ENCODE measurements at regions of chr2 and their contacts with region 1.

Region 1: GRCh38 chr2:25276569-25277465 is 64.9 kb downstream of the DNMT3A start:
- DNase-seq: peak; percentile 54 to 84 (median 74)
- ATAC-seq: peak; percentile 37 to 51
- H3K4me3 Mint-ChIP-seq: peak overlapping the region; percentile 66 to 86 (median 80)
- H3K27ac Mint-ChIP-seq: peak overlapping the region; percentile 95 to 100 (median 99)
- H3K4me1 Mint-ChIP-seq: peaks cover 45 to 89% (median 79%) of the 10 kb centered on the region in 4 donors
- H3K27me3 Mint-ChIP-seq: no peaks in the 10 kb centered on the region

Region 2: DNA sequence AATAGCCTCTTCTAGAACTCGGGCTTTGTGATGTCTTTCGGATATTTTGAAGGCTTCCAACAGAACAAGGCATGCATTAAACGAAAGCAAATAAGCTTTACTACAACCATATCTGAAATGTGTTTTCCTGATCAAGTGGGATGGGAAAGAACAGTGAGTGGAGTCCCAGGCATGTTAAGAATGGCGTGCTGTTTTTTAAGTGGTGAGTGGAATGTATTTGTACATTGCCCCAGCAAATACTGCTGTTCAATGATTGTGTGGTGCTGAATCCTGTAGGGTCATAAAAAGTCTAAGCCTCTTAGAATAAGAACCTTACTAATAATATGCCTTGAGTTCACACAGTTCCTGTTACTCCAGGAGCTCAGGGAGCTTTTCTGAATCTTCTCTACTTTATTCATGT is 160.9 kb before region 1 on chr2:
- POLR2A ChIA-PET with region 1: no interaction called
- DNase-seq: no peak
- ATAC-seq: no peak
- H3K4me3 Mint-ChIP-seq: no peak overlapping the region
- H3K27ac Mint-ChIP-seq: no peak overlapping the region
- H3K4me1 Mint-ChIP-seq: no peaks in the 10 kb centered on the region
- H3K27me3 Mint-ChIP-seq: peaks cover 0 to 6% (median 2%) of the 10 kb centered on the region in 5 donors

Region 3: DNA sequence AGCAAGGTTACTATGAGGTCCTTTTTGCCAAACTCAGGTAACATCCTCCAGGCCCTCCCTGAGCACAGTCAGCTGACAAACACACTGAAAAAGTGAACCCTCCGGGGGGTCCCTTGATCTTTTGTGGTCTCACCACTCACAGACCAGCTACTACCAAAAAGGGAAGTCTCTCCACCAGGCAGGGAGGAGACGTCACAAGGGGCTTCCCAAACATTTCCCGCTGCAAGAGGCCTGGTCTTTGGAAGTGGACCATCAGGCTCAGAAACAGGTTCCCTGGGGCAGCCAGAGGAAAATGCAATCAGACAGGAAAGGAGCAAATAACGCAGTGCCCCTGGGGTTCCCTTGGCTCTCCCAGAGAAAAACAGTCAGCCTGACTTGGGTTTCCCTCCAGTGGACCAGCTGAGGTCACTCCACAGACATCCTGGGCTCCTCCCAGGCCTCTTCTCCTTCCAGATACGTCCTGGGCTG is 69.7 kb before region 1 on chr2:
- POLR2A ChIA-PET with region 1: interaction called, 11 read pairs
- DNase-seq: peak in 8 of 10 donors; percentile 19 to 74 (median 49)
- ATAC-seq: peak; percentile 49 to 79
- H3K4me3 Mint-ChIP-seq: peak overlapping the region in 8 of 10 donors; percentile 5 to 78 (median 52)
- H3K27ac Mint-ChIP-seq: peak overlapping the region; percentile 46 to 86 (median 74)
- H3K4me1 Mint-ChIP-seq: peaks cover 21 to 65% (median 57%) of the 10 kb centered on the region in 4 donors
- H3K27me3 Mint-ChIP-seq: no peaks in the 10 kb centered on the region

Region 4: DNA sequence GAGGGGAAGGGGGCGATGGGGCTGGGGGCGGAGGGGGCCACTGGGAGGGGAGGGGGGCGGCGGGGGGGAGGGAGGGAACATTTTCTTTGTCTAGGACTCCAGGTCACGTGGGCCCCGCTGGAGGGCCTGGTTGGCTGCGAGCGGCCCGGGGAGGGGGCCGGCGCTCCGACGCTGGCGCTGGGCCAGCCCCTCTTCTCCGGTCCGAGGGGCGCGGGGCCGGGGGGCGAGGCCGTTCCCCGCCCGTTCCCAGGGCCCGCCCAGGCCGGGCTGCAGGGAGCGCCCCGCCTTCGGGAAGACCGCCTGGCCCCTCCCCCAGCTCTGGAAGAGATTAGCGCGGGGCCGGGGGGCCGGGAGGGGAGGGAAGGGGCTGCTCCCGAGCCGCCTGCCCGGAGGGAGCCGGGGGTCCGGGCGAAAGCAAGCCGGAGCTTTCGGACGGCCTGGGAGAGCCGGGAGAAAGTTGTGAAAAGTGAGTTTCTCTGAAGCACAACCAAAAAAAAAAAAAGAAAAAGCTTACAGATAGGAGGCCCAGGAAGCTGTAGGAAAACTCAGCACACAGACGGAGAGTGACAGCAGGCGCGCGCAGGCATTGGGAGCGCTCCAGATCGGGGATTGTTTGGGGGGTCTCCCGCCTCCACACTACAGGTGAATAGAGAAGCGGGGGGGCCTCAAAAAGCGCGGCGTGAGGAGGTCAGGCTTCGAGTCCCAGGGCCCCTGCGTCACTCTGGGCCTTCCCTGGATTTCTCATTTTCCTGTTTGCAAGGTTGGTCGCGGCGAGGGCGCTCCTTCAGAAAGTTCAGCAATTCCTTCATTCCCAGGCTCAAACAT is 24.3 kb before region 1 on chr2:
- POLR2A ChIA-PET with region 1: interaction called, 56 read pairs
- DNase-seq: peak; percentile 35 to 72 (median 49)
- ATAC-seq: peak; percentile 46 to 56
- H3K4me3 Mint-ChIP-seq: peak overlapping the region; percentile 83 to 95 (median 91)
- H3K27ac Mint-ChIP-seq: peak overlapping the region; percentile 85 to 96 (median 91)
- H3K4me1 Mint-ChIP-seq: peaks cover 42 to 62% (median 53%) of the 10 kb centered on the region in 4 donors
- H3K27me3 Mint-ChIP-seq: no peaks in the 10 kb centered on the region

Region 5: GRCh38 chr2:25294573-25295462 is 18.0 kb after region 1 on chr2:
- POLR2A ChIA-PET with region 1: interaction called, 358 read pairs
- DNase-seq: peak; percentile 56 to 89 (median 75)
- ATAC-seq: peak; percentile 79 to 82
- H3K4me3 Mint-ChIP-seq: peak overlapping the region; percentile 66 to 94 (median 83)
- H3K27ac Mint-ChIP-seq: peak overlapping the region; percentile 95 to 99 (median 98)
- H3K4me1 Mint-ChIP-seq: peaks cover 39 to 79% (median 75%) of the 10 kb centered on the region in 4 donors
- H3K27me3 Mint-ChIP-seq: no peaks in the 10 kb centered on the region

Region 6: GRCh38 chr2:25309402-25309801 is 32.6 kb after region 1 on chr2:
- POLR2A ChIA-PET with region 1: interaction called, 47 read pairs
- DNase-seq: peak; percentile 45 to 85 (median 66)
- ATAC-seq: peak; percentile 48 to 54
- H3K4me3 Mint-ChIP-seq: peak overlapping the region in 8 of 10 donors; percentile 23 to 73 (median 53)
- H3K27ac Mint-ChIP-seq: peak overlapping the region; percentile 58 to 91 (median 85)
- H3K4me1 Mint-ChIP-seq: peaks cover 50 to 98% (median 90%) of the 10 kb centered on the region in 4 donors
- H3K27me3 Mint-ChIP-seq: no peaks in the 10 kb centered on the region

Region 7: GRCh38 chr2:25342372-25343186 is 65.8 kb after region 1 on chr2:
- POLR2A ChIA-PET with region 1: interaction called, 33 read pairs
- DNase-seq: peak; percentile 74 to 88 (median 82)
- ATAC-seq: peak; percentile 80 to 87
- H3K4me3 Mint-ChIP-seq: peak overlapping the region; percentile 70 to 90 (median 81)
- H3K27ac Mint-ChIP-seq: peak overlapping the region in 6 of 10 donors; percentile 37 to 90 (median 81)
- H3K4me1 Mint-ChIP-seq: peaks cover 14 to 40% (median 28%) of the 10 kb centered on the region in 4 donors
- H3K27me3 Mint-ChIP-seq: no peaks in the 10 kb centered on the region

Region 8: GRCh38 chr2:25453199-25453905 is 176.5 kb after region 1 on chr2:
- POLR2A ChIA-PET with region 1: no interaction called
- DNase-seq: no peak
- ATAC-seq: no peak
- H3K4me3 Mint-ChIP-seq: no peak overlapping the region
- H3K27ac Mint-ChIP-seq: no peak overlapping the region
- H3K4me1 Mint-ChIP-seq: no peaks in the 10 kb centered on the region
- H3K27me3 Mint-ChIP-seq: no peaks in the 10 kb centered on the region

Region 9: DNA sequence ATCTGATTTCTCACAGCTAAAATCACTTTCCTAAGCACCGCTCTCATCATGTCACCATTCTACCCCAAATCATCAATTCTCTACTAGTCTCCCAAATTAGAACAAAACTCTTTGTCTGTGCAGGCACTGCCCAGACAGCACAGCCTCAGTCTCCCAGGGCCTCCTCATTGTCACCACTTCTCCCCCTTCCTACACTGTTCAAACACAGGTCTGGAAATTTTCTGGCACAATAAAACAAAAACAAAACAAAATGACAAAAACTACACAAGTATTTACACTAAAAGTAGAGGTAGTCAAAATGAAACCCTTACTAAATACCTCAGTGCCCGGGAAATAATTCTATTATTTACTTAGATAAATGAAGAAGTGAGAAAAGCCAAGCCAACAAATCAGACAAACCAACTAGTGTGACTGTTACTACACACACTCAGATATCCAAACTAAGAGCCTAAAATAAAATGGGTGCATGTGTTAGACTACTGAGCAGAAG is 221.1 kb after region 1 on chr2:
- POLR2A ChIA-PET with region 1: no interaction called
- DNase-seq: no peak
- ATAC-seq: no peak
- H3K4me3 Mint-ChIP-seq: no peak overlapping the region
- H3K27ac Mint-ChIP-seq: peak overlapping the region in 1 of 10 donors; percentile 10
- H3K4me1 Mint-ChIP-seq: peaks cover 0 to 6% (median 2%) of the 10 kb centered on the region in 4 donors
- H3K27me3 Mint-ChIP-seq: no peaks in the 10 kb centered on the region

Measured in naive thymus-derived CD8-positive, alpha-beta T cell (primary cell).